ENCODE measurements at regions of chr7 and their contacts with region 1.

Region 1: GRCh38 chr7:55132890-55133551 is 114.2 kb downstream of the EGFR start:
- DNase-seq: peak; percentile 100
- H3K4me3 ChIP-seq: peak overlapping the region in 1 of 3 experiments; percentile 27
- H3K27ac ChIP-seq: peak overlapping the region; percentile 97
- H3K4me1 ChIP-seq: peaks cover 79% of the 10 kb centered on the region
- H3K27me3 ChIP-seq: no peaks in the 10 kb centered on the region
- CTCF ChIP-seq: peak in 1 of 2 donors; percentile 14

Region 2: GRCh38 chr7:54831644-54832099 is 301.3 kb before region 1 on chr7:
- CTCF ChIA-PET with region 1: no interaction called
- dilution Hi-C with region 1: no loop called
- in situ Hi-C with region 1: no loop called
- intact Hi-C with region 1: loop called (anchors 2 kb)
- DNase-seq: peak; percentile 99
- H3K4me3 ChIP-seq: peak overlapping the region in 2 of 3 experiments; percentile 23 to 32
- H3K27ac ChIP-seq: peak overlapping the region; percentile 94
- H3K4me1 ChIP-seq: peaks cover 28% of the 10 kb centered on the region
- H3K27me3 ChIP-seq: no peaks in the 10 kb centered on the region
- CTCF ChIP-seq: no peak

Region 3: GRCh38 chr7:55053651-55054571 is 79.1 kb before region 1 on chr7:
- CTCF ChIA-PET with region 1: no interaction called
- dilution Hi-C with region 1: no loop called
- in situ Hi-C with region 1: no loop called
- intact Hi-C with region 1: loop called (anchors 5 kb)
- DNase-seq: peak; percentile 82
- H3K4me3 ChIP-seq: peak overlapping the region in 1 of 3 experiments; percentile 28
- H3K27ac ChIP-seq: peak overlapping the region; percentile 96
- H3K4me1 ChIP-seq: peaks cover 74% of the 10 kb centered on the region
- H3K27me3 ChIP-seq: no peaks in the 10 kb centered on the region
- CTCF ChIP-seq: peak in 1 of 2 donors; percentile 37

Region 4: GRCh38 chr7:55065079-55065478 is 67.9 kb before region 1 on chr7:
- CTCF ChIA-PET with region 1: no interaction called
- dilution Hi-C with region 1: no loop called
- in situ Hi-C with region 1: no loop called
- intact Hi-C with region 1: loop called (anchors 1 kb)
- DNase-seq: peak; percentile 89
- H3K4me3 ChIP-seq: no peak overlapping the region
- H3K27ac ChIP-seq: peak overlapping the region; percentile 97
- H3K4me1 ChIP-seq: peaks cover 71% of the 10 kb centered on the region
- H3K27me3 ChIP-seq: no peaks in the 10 kb centered on the region
- CTCF ChIP-seq: no peak

Region 5: GRCh38 chr7:55073945-55074499 is 59.0 kb before region 1 on chr7:
- CTCF ChIA-PET with region 1: no interaction called
- dilution Hi-C with region 1: no loop called
- in situ Hi-C with region 1: no loop called
- intact Hi-C with region 1: loop called (anchors 1 kb)
- DNase-seq: peak; percentile 89
- H3K4me3 ChIP-seq: peak overlapping the region in 1 of 3 experiments; percentile 10
- H3K27ac ChIP-seq: peak overlapping the region; percentile 97
- H3K4me1 ChIP-seq: peaks cover 58% of the 10 kb centered on the region
- H3K27me3 ChIP-seq: no peaks in the 10 kb centered on the region
- CTCF ChIP-seq: no peak

Region 6: DNA sequence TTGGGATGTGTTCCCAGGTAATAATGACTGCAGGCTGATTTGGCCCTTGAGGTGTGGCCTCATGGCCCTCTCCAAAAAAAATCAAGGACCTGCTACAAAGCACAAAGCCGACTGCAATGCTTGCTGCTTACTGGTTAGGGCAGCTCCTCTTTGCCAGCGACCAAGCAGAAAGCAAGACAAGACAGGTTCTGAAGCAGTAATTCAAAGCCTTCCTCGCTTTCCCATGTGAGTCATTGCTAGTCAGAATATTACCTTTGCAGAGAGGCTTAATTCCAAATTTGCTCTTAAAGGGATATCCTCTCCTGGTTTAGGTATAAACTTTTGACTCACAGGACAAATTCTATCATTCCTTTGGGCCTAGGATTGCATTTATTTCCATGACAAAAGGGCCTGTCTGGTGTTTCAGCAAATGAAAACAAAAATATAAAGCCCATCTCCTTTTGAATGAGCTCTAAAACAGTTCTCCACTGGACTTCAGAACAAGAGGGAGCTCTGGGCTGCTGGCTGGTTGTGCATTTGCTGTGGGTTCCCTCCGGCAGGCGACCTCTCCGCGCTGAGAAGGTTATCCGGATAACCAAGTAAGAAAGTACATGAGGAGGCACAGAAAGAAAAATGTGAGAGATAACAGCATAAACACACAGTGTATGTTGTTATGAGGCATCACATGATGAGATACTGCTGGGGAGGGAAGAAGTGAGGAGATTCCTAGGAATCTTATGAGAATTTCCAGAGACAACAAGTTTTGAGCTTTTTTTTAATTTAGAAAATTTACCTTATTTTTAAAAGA is 23.4 kb before region 1 on chr7:
- CTCF ChIA-PET with region 1: no interaction called
- dilution Hi-C with region 1: no loop called
- in situ Hi-C with region 1: no loop called
- intact Hi-C with region 1: loop called (anchors 1 kb)
- DNase-seq: peak; percentile 96
- H3K4me3 ChIP-seq: peak overlapping the region; percentile 4 to 35 (median 8)
- H3K27ac ChIP-seq: peak overlapping the region; percentile 91
- H3K4me1 ChIP-seq: peaks cover 96% of the 10 kb centered on the region
- H3K27me3 ChIP-seq: no peaks in the 10 kb centered on the region
- CTCF ChIP-seq: no peak

Region 7: DNA sequence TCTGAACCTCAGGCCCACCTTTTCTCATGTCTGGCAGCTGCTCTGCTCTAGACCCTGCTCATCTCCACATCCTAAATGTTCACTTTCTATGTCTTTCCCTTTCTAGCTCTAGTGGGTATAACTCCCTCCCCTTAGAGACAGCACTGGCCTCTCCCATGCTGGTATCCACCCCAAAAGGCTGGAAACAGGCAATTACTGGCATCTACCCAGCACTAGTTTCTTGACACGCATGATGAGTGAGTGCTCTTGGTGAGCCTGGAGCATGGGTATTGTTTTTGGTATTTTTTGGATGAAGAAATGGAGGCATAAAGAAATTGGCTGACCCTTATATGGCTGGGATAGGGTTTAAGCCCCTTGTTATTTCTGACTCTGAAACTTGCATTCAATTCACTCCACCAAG is 41.8 kb after region 1 on chr7:
- CTCF ChIA-PET with region 1: no interaction called
- dilution Hi-C with region 1: no loop called
- in situ Hi-C with region 1: no loop called
- intact Hi-C with region 1: no loop called
- DNase-seq: no peak
- H3K4me3 ChIP-seq: no peak overlapping the region
- H3K27ac ChIP-seq: no peak overlapping the region
- H3K4me1 ChIP-seq: peaks cover 13% of the 10 kb centered on the region
- H3K27me3 ChIP-seq: no peaks in the 10 kb centered on the region
- CTCF ChIP-seq: no peak

Region 8: GRCh38 chr7:55185941-55186609 is 53.1 kb after region 1 on chr7:
- CTCF ChIA-PET with region 1: no interaction called
- dilution Hi-C with region 1: no loop called
- in situ Hi-C with region 1: no loop called
- intact Hi-C with region 1: no loop called
- DNase-seq: peak; percentile 97
- H3K4me3 ChIP-seq: no peak overlapping the region
- H3K27ac ChIP-seq: peak overlapping the region; percentile 44
- H3K4me1 ChIP-seq: peaks cover 31% of the 10 kb centered on the region
- H3K27me3 ChIP-seq: no peaks in the 10 kb centered on the region
- CTCF ChIP-seq: no peak

Measured in mammary epithelial cell (primary cell).